BJ (cell line): ENCODE measurements at regions of chr15 and their contacts with region 1.

Region 1: DNA sequence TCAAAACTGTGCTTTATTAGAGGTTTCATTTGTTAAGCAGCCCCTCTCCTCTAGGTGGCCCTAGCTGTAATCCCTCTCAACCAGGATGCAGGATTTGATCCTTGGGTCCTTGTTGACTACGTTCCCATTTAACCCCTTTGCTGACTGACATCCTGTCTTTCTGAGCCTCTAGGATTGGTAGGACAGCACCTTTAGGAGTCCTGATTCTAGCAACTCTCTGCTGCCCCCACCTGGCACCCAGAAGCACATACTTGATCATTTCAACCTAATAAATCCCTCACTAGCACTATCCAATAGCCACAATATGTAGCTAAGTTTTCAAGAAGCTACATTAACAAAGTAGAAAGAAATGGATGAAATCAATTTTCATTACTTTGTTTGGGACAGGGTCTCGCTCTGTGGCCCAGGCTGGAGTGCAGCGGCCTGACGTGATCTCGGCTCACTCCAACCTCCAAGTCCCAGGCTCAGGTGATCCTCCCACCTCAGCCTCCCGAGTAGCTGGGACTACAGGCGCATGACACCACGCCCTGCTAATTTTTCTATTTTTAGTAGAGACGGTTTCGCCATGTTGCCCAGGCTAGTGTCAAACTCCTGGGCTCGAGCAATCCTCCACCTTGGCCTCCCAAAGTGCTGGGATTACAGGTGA is 28.3 kb downstream of the RSL24D1 start:
- DNase-seq: no peak
- H3K4me3 ChIP-seq: no peak overlapping the region
- H3K27me3 ChIP-seq: no peaks in the 10 kb centered on the region
- CTCF ChIP-seq: peak; percentile 85

Region 2: DNA sequence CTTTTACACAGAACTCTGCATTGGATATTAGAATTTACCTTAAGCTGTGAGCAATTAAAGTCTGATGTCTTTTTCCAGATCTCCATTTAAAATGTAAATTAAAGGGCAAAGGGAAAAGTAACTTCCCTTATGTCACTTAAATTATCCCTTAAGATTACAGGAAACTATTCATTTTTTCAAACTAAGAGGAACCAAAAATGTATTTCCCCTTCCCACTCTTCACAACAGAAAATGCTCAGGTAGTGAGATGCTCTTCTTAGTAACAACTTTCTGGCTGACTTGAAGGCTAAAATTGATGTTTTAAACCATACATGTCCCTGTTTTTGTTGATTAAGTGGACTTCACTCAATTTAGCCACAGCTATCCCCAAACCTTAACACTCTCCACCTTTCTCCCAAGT is 10.7 kb after region 1 on chr15:
- CTCF ChIA-PET with region 1: interaction called, 13 read pairs
- POLR2A ChIA-PET with region 1: no interaction called
- DNase-seq: no peak
- H3K4me3 ChIP-seq: no peak overlapping the region
- H3K27me3 ChIP-seq: no peaks in the 10 kb centered on the region
- CTCF ChIP-seq: no peak